MCF 10A (cell line): ENCODE measurements at regions of chr3 and their contacts with region 1.

Region 1: DNA sequence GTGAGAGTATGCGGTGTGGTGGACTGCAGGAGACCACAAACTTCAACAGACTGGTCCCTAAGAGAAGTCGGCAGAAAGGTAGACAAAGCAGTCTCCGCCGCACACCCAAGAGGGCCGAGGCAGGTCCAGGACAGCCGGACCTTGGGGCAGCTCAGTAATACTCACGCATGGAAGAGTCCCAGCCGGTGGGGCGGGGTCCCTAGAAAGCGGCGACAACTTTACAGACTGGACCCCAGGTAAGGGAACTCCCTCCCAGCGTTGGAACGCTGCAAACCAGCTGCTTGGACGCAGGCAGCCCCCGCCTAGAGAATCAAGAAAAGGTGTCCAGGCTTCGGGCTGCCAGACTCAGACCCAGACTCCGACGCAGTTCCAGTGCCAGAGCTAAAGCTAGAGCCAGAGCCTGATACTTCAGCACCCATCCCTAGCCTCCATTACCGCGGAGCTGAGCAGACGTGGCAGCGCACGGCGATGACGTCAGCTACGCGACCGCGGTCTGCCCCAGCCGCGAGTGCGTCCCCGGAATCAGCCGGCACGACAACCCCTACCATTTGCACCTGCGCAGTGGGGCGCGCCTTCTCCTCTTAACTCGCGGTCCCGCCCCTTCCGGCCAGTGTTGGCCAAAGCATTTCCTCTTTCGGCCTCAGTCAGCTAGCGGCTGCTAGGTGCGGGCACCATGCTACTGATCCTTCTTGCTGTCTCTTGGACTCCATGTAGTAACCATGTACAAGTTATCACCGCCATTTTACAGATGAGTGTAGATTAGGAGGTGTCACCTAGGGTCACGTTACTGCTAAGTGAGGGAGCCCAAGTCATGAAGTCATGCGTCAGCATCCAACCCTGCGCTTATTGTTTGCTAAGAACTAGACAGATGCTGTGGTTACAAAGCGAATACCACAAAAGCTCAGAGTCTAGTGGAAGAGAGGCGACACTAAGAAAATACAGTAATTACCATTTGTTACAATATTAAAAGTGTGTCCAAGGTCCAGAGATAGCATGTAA is at the start of gene TMEM39A:
- DNase-seq: peak; percentile 98
- H3K4me3 Mint-ChIP-seq: peak within 1 kb of the TSS; percentile 89
- H3K27ac Mint-ChIP-seq: peak within 1 kb of the TSS; percentile 94
- H3K4me1 Mint-ChIP-seq: peaks cover 28% of the 10 kb centered on the region
- H3K27me3 Mint-ChIP-seq: no peaks in the 10 kb centered on the region
- CTCF ChIP-seq: no peak
- total RNA-seq, gene TMEM39A: 87.1 and 105 TPM in 2 replicates

Region 2: GRCh38 chr3:119293871-119294695 is 169.4 kb before region 1 on chr3 and contains the start of gene ARHGAP31:
- CTCF ChIA-PET with region 1: no interaction called
- POLR2A ChIA-PET with region 1: interaction called, 32 read pairs
- intact Hi-C with region 1: no loop called
- DNase-seq: peak; percentile 51
- H3K4me3 Mint-ChIP-seq: peak within 1 kb of the TSS; percentile 81
- H3K27ac Mint-ChIP-seq: peak within 1 kb of the TSS; percentile 63
- H3K4me1 Mint-ChIP-seq: peaks cover 13% of the 10 kb centered on the region
- H3K27me3 Mint-ChIP-seq: no peaks in the 10 kb centered on the region
- CTCF ChIP-seq: no peak
- total RNA-seq, gene ARHGAP31: 4.4 and 4.7 TPM in 2 replicates

Region 3: GRCh38 chr3:119481079-119481478 is 17.6 kb after region 1 on chr3:
- CTCF ChIA-PET with region 1: interaction called, 3 read pairs
- POLR2A ChIA-PET with region 1: interaction called, 19 read pairs
- intact Hi-C with region 1: no loop called
- DNase-seq: no peak
- H3K4me3 Mint-ChIP-seq: no peak overlapping the region
- H3K27ac Mint-ChIP-seq: peak overlapping the region; percentile 79
- H3K4me1 Mint-ChIP-seq: peaks cover 5% of the 10 kb centered on the region
- H3K27me3 Mint-ChIP-seq: no peaks in the 10 kb centered on the region
- CTCF ChIP-seq: no peak

Region 4: DNA sequence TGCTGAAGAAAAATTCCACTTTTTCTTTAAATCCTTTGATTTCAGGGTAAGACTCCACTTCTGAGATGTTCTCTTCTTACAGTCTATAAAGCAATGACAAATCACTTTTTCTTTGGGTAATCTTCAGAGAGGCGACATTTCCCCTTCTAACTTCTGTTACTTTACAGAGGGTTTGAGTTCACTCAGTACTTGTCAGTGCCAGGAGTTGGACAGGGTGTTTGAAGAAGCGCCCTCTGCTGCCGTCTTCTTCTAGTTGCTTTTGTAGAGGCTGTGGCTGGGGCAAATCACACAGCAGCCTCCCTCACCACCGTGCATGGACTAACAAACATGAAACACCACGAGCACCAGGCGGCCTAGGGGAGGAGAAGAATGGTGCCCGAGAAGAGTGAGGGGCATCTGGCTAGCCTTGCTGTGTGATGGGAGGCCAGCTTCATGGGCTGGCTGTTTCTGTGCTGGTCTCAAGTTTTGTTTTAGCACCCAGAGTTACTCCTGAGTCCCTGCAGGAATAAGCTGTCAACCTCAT is 96.0 kb after region 1 on chr3 and contains the start of gene CD80:
- CTCF ChIA-PET with region 1: no interaction called
- POLR2A ChIA-PET with region 1: no interaction called
- intact Hi-C with region 1: no loop called
- DNase-seq: peak; percentile 57
- H3K4me3 Mint-ChIP-seq: no peak within 1 kb of the TSS
- H3K27ac Mint-ChIP-seq: no peak within 1 kb of the TSS
- H3K4me1 Mint-ChIP-seq: no peaks in the 10 kb centered on the region
- H3K27me3 Mint-ChIP-seq: no peaks in the 10 kb centered on the region
- CTCF ChIP-seq: peak; percentile 20
- total RNA-seq, gene CD80: not detected in 2 replicates

Region 5: DNA sequence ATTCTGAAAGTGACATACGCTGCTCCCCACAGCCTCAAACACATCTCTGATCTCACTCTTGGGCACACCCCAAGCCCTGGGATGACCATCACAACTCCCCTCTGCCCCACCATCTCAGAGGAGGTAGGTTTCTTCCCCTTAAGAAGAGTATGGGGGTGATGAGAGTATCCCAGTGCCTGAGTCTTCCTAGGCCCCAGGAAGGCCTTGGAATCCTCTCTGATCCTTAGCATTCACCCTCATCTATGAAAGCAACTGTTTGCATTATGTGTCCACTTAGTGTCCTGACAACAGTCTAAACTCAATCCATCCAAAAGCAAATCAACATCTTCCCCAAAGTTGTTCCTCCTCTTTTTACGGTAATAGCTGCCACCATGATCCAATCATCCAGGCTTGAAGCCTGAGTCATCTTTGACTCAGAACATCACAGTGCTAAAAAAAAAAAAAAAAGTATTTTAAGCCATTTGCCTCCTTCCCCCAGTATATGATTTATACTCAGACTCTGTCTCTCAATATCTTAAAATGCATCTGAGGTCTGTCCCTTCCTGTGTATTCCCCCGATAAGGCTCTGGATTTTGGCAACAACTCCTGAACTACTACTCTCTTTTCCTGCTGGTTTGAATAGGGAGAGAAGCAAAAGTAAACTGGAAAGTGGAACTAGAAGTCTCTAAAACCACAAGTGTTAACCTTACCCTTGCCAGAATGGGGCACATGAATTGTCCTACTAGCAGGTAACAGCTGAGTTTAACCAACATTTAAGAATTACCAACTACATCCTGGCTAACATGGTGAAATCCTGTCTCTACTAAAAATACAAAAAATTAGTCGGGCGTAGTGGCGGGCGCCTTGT is 174.4 kb after region 1 on chr3:
- CTCF ChIA-PET with region 1: no interaction called
- POLR2A ChIA-PET with region 1: interaction called, 11 read pairs
- intact Hi-C with region 1: no loop called
- DNase-seq: peak; percentile 58
- H3K4me3 Mint-ChIP-seq: no peak overlapping the region
- H3K27ac Mint-ChIP-seq: peak overlapping the region; percentile 90
- H3K4me1 Mint-ChIP-seq: peaks cover 32% of the 10 kb centered on the region
- H3K27me3 Mint-ChIP-seq: no peaks in the 10 kb centered on the region
- CTCF ChIP-seq: no peak

Region 6: DNA sequence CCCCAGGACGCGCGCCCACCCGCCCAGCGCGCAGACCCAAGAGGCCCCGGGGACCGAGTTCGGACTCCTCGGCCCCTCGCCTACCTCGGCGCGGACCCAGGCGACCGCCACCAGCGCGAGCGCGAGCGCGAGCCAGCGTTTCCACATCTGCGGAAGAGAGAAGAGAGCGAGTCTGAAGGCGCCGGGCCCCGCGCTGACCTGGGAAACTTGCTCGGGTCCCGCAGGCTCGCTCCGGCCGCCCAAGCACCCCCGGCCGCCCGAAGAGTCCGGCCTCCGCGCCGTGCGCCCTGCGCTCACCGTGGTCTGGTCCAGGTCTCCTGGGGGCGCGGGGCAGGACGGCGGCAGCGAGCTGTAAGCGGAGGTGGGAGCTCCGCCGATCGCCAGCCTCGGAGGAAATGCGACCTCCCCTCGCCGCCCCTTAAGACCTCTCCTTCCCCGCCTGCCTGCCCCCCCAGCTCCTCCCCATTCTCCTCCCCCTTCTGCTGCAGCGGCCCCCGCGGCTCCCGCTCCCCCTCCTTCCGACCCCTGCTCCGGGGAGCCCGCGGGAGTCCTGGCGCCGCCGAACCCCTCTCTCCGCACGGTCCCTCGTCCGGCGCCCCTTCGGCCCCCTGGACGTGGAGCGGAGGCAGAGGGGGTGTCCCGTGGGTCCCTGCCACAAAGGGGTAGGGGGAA is 987.3 kb after region 1 on chr3 and contains the start of gene FSTL1:
- CTCF ChIA-PET with region 1: no interaction called
- POLR2A ChIA-PET with region 1: no interaction called
- intact Hi-C with region 1: no loop called
- DNase-seq: peak; percentile 31
- H3K4me3 Mint-ChIP-seq: peak within 1 kb of the TSS; percentile 86
- H3K27ac Mint-ChIP-seq: peak within 1 kb of the TSS; percentile 90
- H3K4me1 Mint-ChIP-seq: peaks cover 15% of the 10 kb centered on the region
- H3K27me3 Mint-ChIP-seq: no peaks in the 10 kb centered on the region
- CTCF ChIP-seq: no peak
- total RNA-seq, gene FSTL1: 49.4 and 56.4 TPM in 2 replicates

Region 7: DNA sequence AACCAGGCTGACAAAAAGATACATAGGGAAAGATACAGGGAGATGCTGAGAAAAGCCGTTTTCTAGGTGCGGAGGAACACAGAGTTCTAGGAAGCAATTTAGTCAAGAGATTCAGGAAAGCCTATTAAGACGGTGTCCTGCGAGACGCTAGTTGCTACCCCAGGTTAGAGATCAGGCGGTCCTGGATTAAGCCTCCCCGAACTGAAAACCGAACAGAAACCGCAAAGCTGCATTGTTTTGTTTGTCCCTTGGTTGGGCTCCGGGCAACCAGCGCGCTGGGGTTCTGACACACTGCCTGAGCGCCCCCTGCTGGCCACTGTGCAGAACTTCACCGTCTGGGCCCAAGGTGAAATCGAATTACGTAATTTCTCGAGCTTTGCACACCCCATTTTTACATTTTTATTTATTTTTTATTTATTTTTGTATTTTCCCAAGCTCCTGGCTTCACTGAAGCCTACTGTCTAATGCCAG is 1095.3 kb after region 1 on chr3:
- CTCF ChIA-PET with region 1: no interaction called
- POLR2A ChIA-PET with region 1: no interaction called
- intact Hi-C with region 1: no loop called
- DNase-seq: peak; percentile 84
- H3K4me3 Mint-ChIP-seq: peak overlapping the region; percentile 78
- H3K27ac Mint-ChIP-seq: peak overlapping the region; percentile 92
- H3K4me1 Mint-ChIP-seq: peaks cover 22% of the 10 kb centered on the region
- H3K27me3 Mint-ChIP-seq: no peaks in the 10 kb centered on the region
- CTCF ChIP-seq: peak; percentile 97